Calu3 (cell line): ENCODE measurements at regions of chr2 and their contacts with region 1.

Region 1: GRCh38 chr2:37877457-37878315 is 47.4 kb upstream of the RMDN2 start:
- DNase-seq: peak; percentile 47
- H3K4me3 Mint-ChIP-seq: no peak overlapping the region
- H3K27ac Mint-ChIP-seq: no peak overlapping the region
- H3K4me1 Mint-ChIP-seq: peaks cover 26% of the 10 kb centered on the region
- H3K27me3 Mint-ChIP-seq: no peaks in the 10 kb centered on the region
- CTCF ChIP-seq: peak; percentile 60

Region 2: DNA sequence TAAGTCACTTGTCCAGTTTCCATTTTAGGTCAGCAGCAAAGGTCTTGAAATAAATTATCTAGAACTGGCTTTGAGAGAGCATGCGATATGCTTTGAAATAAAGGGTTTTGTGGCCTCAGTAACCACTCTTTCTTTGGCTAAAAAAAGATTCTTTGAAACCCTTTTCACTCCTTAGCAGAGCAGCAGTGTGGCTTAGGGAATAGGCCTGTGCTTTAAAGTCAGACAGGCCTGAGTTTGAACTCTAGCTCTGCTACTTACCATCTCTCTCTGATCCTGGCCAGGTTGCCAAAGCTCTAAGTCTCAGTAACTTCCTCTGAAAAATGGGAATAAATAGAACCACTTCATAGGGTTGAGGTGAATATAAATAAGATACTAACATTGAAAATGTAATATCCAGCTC is 480.5 kb before region 1 on chr2:
- CTCF ChIA-PET with region 1: interaction called, 35 read pairs
- intact Hi-C with region 1: loop called (anchors 2 kb)
- DNase-seq: no peak
- H3K4me3 Mint-ChIP-seq: no peak overlapping the region
- H3K27ac Mint-ChIP-seq: no peak overlapping the region
- H3K4me1 Mint-ChIP-seq: no peaks in the 10 kb centered on the region
- H3K27me3 Mint-ChIP-seq: no peaks in the 10 kb centered on the region
- CTCF ChIP-seq: no peak

Region 3: DNA sequence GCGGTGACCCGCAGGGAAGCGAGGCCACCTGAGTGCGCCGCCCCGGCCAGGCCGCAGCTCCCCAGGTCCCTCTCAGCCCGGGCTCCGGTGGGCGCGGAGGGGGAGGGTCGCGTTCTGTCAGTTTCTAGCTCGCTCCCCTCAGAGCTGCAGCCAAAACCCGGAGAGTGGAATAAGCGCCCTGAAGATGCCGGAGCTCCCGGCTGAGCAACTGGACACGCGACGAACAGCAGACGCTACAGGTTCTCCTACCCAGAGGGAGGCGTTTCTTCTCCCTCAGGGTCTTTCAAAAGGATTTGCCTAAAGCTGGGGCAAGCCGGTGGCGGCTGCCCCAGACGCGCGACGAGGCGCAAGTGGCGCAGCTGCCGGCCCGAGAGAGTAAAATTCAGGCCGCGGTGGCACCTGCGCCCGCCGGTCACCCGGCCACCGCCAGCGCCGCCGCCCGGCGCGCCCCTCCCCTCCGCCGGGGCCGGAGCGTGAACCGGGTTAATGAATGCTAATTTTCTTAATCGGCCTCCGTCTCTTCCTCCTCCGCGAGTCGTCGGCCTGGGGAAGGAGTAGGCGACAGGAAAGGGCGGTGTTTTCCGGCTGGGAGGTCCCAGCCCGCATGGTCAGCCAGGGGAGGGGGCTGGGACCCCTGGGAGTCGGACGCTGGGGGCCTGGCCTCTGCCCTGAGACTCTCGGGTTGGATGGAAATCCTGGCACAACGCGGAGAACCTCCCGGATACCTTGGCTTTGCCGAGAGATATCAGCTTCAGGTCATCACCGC is 205.4 kb before region 1 on chr2:
- CTCF ChIA-PET with region 1: interaction called, 7 read pairs
- intact Hi-C with region 1: loop called (anchors 5 kb)
- DNase-seq: peak; percentile 83
- H3K4me3 Mint-ChIP-seq: peak overlapping the region; percentile 95
- H3K27ac Mint-ChIP-seq: peak overlapping the region; percentile 19
- H3K4me1 Mint-ChIP-seq: peaks cover 59% of the 10 kb centered on the region
- H3K27me3 Mint-ChIP-seq: no peaks in the 10 kb centered on the region
- CTCF ChIP-seq: no peak

Region 4: DNA sequence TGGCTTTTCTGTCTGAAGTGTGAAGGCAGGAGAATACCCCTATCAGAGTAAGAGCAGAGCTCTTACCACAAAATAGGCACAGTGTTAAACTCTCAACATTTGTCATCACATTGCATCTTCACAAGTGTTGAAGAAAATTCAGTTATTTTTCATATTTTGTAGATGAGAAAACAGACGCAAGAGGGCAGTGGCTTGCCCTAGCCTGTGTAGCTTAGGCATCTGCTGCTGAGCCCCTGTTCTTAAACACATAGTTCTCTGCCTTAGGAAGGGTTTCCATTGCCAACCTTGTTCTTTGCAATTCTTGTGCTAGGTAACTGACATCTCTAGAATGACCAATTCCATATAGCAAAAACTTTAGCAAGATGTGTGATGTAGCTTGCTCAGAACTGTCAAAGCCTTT is 65.3 kb before region 1 on chr2:
- CTCF ChIA-PET with region 1: interaction called, 12 read pairs
- intact Hi-C with region 1: loop called (anchors 1 kb)
- DNase-seq: no peak
- H3K4me3 Mint-ChIP-seq: no peak overlapping the region
- H3K27ac Mint-ChIP-seq: no peak overlapping the region
- H3K4me1 Mint-ChIP-seq: no peaks in the 10 kb centered on the region
- H3K27me3 Mint-ChIP-seq: no peaks in the 10 kb centered on the region
- CTCF ChIP-seq: no peak

Region 5: DNA sequence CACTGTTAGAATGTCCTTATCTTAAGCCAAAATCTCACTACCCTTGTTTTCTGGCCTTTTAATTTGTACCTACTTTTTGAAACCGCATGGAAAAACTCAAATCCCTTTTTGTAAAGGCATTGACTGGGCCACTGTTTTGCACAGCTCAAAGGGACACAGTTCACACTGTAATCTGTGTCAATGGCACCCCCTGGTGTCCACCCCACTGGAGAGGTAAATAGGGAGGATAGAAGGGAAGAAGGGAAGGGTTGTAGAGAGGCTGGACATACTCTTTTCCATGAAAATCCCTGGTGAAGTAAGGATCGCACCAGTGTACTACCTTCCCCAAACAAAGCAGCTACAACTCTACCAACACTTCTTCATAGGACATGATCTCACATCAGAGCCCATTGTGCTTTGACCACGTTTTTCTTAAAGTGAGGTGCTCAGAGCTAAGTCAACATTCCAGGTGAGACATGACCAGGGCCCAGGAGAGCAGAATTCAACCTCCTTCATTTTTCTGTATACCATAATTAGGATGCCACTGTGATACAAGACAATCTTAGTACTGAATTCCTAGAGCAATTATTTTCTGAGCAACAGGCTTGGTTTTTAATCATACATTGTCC is 45.0 kb before region 1 on chr2:
- CTCF ChIA-PET with region 1: interaction called, 28 read pairs
- intact Hi-C with region 1: loop called (anchors 5 kb)
- DNase-seq: peak; percentile 90
- H3K4me3 Mint-ChIP-seq: no peak overlapping the region
- H3K27ac Mint-ChIP-seq: no peak overlapping the region
- H3K4me1 Mint-ChIP-seq: peaks cover 9% of the 10 kb centered on the region
- H3K27me3 Mint-ChIP-seq: no peaks in the 10 kb centered on the region
- CTCF ChIP-seq: peak; percentile 75

Region 6: DNA sequence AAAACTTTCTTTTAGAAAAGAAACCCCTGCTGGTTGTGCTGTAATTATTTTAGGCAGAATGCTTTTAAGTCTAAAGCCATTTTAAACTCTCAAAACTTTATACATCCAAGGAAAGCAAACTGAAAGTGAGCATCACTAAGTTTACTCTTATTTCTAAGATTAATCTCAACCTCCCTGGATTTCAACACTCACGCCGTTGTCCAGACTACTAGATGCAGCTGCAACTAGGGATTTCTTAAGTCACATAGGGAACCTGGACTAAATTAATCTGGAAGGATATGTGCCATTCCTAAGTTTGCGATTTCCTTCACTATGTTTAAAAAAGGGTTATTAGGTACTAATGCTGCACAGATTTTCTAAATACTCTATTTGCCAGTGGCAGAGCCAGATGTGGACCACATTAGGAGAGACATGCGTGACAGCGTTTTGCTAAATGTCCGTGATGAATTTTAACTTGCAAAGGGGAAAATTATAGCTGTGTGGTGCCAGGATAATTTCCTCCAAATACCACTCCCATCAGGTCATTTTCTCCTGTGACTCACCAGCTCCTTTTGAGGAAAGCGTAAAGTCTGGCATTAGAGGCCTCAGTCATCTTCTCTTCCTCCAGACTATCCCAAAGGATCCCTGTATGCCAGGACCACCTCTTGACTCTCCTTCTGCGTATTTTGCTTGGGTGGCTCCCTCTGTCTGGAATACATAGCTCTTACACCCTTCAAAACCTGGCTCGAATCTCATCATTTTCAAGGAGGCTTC is 355.7 kb after region 1 on chr2:
- CTCF ChIA-PET with region 1: no interaction called
- intact Hi-C with region 1: no loop called
- DNase-seq: no peak
- H3K4me3 Mint-ChIP-seq: no peak overlapping the region
- H3K27ac Mint-ChIP-seq: no peak overlapping the region
- H3K4me1 Mint-ChIP-seq: no peaks in the 10 kb centered on the region
- H3K27me3 Mint-ChIP-seq: no peaks in the 10 kb centered on the region
- CTCF ChIP-seq: no peak